IMR-90 (cell line): ENCODE measurements at regions of chr12 and their contacts with region 1.

Region 1: GRCh38 chr12:87756111-87756510 is 273.1 kb downstream of the C12orf50 start:
- DNase-seq: peak; percentile 99
- ATAC-seq: peak; percentile 89
- H3K4me3 ChIP-seq: no peak overlapping the region
- H3K27ac ChIP-seq: peak overlapping the region; percentile 80
- H3K4me1 ChIP-seq: peaks cover 7% of the 10 kb centered on the region
- H3K27me3 ChIP-seq: no peaks in the 10 kb centered on the region
- CTCF ChIP-seq: no peak
- POLR2A ChIP-seq: no peak
- RAD21 ChIP-seq: no peak

Region 2: GRCh38 chr12:87809916-87810315 is 53.8 kb after region 1 on chr12:
- CTCF ChIA-PET with region 1: no interaction called
- POLR2A ChIA-PET with region 1: no interaction called
- dilution Hi-C with region 1: no loop called
- in situ Hi-C with region 1: no loop called
- intact Hi-C with region 1: loop called (anchors 2 kb)
- DNase-seq: peak; percentile 87
- ATAC-seq: peak; percentile 44
- H3K4me3 ChIP-seq: no peak overlapping the region
- H3K27ac ChIP-seq: no peak overlapping the region
- H3K4me1 ChIP-seq: peaks cover 25% of the 10 kb centered on the region
- H3K27me3 ChIP-seq: no peaks in the 10 kb centered on the region
- CTCF ChIP-seq: no peak
- POLR2A ChIP-seq: no peak
- RAD21 ChIP-seq: no peak

Region 3: DNA sequence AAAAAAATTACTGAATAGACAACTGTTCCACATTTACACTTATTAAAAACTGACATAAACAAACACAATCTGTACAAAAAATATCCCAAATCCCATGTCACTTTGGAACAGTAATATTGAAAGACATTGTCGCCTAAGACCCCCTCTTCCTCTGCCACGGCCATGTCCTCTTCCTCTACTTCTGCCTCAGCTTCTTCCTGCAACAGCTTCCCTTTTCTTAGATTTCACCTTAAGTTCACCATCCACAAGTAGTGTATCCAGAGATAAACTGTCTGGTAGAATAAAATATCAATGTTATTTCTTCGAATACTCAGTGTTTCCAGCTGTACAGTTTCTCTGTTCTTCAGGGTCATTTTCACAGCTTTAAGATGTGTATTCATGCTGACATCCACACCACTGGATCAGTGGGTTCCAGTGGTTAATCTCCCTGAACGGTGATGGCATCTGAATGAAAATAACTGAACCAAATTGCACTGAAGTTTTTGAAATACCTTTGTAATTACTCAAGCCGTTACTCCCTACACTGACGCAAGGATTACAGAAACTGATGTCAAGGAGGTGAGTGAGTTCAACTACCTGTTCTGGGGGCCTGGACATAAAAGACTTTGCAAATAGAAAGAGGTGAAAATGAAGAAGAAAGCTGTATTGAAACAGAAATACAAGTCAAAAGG is 64.5 kb after region 1 on chr12:
- CTCF ChIA-PET with region 1: no interaction called
- POLR2A ChIA-PET with region 1: no interaction called
- dilution Hi-C with region 1: no loop called
- in situ Hi-C with region 1: no loop called
- intact Hi-C with region 1: no loop called
- DNase-seq: peak; percentile 74
- ATAC-seq: peak; percentile 72
- H3K4me3 ChIP-seq: no peak overlapping the region
- H3K27ac ChIP-seq: peak overlapping the region; percentile 76
- H3K4me1 ChIP-seq: peaks cover 6% of the 10 kb centered on the region
- H3K27me3 ChIP-seq: no peaks in the 10 kb centered on the region
- CTCF ChIP-seq: no peak
- POLR2A ChIP-seq: no peak
- RAD21 ChIP-seq: no peak